ENCODE measurements at regions of chr6 and their contacts with region 1.

Region 1: GRCh38 chr6:159789377-159790148 is at the start of gene TCP1:
- DNase-seq: peak; percentile 99
- ATAC-seq: peak; percentile 86
- H3K4me3 ChIP-seq: peak within 1 kb of the TSS; percentile 90
- H3K27ac ChIP-seq: peak within 1 kb of the TSS; percentile 87
- H3K4me1 ChIP-seq: no peaks in the 10 kb centered on the region; the same call in 1 of the 2 replicates
- H3K27me3 ChIP-seq: no peaks in the 10 kb centered on the region
- CTCF ChIP-seq: no peak
- EP300 ChIP-seq: peak in 1 of 2 experiments; percentile 88; a peak in 1 of 4 replicates
- POLR2A ChIP-seq: peak; percentile 99
- RAD21 ChIP-seq: no peak
- polyA plus RNA-seq, gene TCP1: 201 to 241 TPM

Region 2: DNA sequence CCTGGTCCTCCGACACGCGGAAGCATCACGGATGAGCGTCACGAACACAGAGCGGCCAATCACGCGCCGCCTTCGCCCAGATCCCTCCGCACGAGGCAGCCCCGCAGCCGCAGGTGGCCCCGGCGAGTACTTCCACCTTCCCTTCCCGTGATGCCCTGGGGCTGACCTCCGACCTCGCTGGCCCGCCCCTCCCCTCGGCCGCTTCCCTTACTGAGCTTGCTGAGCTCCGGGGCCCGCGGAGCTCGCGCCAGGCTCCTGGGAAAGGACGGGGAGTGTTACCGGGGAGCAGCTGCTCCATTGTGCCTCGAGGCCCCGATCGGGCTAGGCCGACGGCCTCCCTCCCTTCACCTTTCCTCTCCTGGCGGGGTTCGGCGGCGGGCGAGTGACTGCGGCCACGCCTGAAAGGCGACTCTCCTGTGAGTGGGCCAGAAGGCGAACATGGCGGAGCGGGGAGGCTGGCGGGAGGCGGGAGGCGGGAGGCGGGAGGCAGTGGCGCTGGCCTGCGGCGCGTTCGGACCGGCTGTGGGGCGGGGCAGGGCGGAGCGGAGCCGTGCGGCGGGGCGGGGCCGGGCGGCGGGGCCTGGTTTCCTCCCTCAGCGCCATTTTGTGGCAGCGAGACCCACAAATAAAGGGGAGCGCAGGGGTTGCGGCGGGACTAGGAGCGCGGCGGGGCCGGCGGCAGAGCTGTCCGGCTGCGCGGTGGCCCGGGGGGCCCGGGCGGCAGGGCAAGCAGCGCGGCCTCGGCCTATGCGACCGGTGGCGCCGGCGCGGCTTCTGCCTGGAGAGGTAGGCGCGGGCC is 62.4 kb before region 1 on chr6 and contains the start of gene WTAP:
- CTCF ChIA-PET with region 1: interaction called, 8 read pairs
- POLR2A ChIA-PET with region 1: interaction called, 85 read pairs
- RAD21 ChIA-PET with region 1: interaction called, 52 read pairs
- SMC1A ChIA-PET with region 1: interaction called, 108 read pairs
- in situ Hi-C with region 1: no loop called
- intact Hi-C with region 1: loop called (anchors 1 kb)
- DNase-seq: peak; percentile 89
- ATAC-seq: peak; percentile 86
- H3K4me3 ChIP-seq: peak within 1 kb of the TSS; percentile 91
- H3K27ac ChIP-seq: peak within 1 kb of the TSS; percentile 97
- H3K4me1 ChIP-seq: no peaks in the 10 kb centered on the region
- H3K27me3 ChIP-seq: no peaks in the 10 kb centered on the region
- CTCF ChIP-seq: no peak
- EP300 ChIP-seq: no peak
- POLR2A ChIP-seq: peak; percentile 95
- RAD21 ChIP-seq: no peak
- polyA plus RNA-seq, gene WTAP: 102 to 132 TPM

Region 3: DNA sequence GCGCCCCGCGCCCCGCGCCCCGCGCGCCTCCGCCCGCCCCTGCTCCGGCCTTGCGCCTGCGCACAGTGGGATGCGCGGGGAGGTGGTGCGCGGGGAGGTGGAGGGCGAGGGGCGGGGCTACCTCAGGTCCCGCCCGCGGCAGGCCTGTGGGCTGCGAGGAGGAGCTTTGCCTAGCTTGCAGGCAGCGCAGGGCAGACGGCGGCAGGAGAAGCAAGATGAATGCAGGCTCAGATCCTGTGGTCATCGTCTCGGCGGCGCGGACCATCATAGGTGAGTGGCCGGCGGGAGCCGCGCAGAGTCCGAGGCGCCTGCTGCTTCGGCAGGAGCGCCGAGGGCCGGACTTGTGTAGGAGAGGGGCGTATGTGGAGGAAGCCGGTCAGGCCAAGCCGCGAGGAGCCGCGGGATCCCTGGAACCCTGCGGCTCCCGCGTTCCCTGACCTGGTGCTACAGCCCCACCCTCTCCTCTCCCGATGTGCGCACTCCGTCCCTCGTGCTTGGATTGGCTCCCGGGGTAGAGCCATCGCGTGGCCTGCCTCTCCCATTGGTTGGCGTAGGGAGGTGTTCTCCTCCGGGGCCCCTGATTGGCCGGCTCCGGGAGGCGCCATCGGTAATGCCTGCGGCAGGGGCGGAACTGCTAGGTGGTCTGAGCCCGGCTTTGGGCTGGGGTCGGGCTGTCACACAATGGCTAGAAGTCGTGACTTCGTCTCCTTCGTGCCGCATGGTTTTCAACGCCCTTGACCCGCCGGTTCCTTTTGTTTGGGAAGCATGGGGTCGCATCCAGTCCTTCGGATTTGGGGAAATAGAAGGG is 27.5 kb before region 1 on chr6 and contains the start of gene ACAT2:
- CTCF ChIA-PET with region 1: interaction called, 5 read pairs
- POLR2A ChIA-PET with region 1: interaction called, 50 read pairs
- RAD21 ChIA-PET with region 1: interaction called, 6 read pairs
- SMC1A ChIA-PET with region 1: interaction called, 18 read pairs
- in situ Hi-C with region 1: no loop called
- intact Hi-C with region 1: loop called (anchors 1 kb)
- DNase-seq: peak; percentile 78
- ATAC-seq: peak; percentile 98
- H3K4me3 ChIP-seq: peak within 1 kb of the TSS; percentile 93
- H3K27ac ChIP-seq: peak within 1 kb of the TSS; percentile 96
- H3K4me1 ChIP-seq: peaks cover 5% of the 10 kb centered on the region
- H3K27me3 ChIP-seq: no peaks in the 10 kb centered on the region
- CTCF ChIP-seq: 0 out of 6 replicates have a peak, but pooled peaks of 1 of the 3 experiments have one; percentile 4
- EP300 ChIP-seq: no peak
- POLR2A ChIP-seq: peak; percentile 88
- RAD21 ChIP-seq: no peak
- polyA plus RNA-seq, gene ACAT2: 249 to 257 TPM

Region 4: DNA sequence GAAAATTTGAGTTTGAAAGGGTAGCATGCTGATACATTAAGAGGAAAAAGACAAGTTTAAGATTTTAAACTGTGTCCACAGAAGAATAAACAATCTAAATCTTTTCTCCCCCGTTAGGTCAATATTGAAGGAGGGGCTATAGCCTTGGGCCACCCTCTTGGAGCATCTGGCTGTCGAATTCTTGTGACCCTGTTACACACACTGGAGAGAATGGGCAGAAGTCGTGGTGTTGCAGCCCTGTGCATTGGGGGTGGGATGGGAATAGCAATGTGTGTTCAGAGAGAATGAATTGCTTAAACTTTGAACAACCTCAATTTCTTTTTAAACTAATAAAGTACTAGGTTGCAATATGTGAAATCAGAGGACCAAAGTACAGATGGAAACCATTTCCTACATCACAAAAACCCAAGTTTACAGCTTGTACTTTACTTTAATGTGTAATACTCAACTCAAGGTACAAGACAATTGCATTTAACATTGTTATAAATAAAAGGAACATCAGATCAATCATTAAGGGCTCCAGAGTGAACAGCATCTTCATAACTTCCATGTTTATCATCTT is 10.9 kb before region 1 on chr6:
- CTCF ChIA-PET with region 1: interaction called, 3 read pairs
- POLR2A ChIA-PET with region 1: interaction called, 4 read pairs
- RAD21 ChIA-PET with region 1: interaction called, 3 read pairs
- SMC1A ChIA-PET with region 1: interaction called, 28 read pairs
- in situ Hi-C with region 1: no loop called
- intact Hi-C with region 1: no loop called
- DNase-seq: no peak
- ATAC-seq: no peak
- H3K4me3 ChIP-seq: no peak overlapping the region
- H3K27ac ChIP-seq: no peak overlapping the region
- H3K4me1 ChIP-seq: no peaks in the 10 kb centered on the region
- H3K27me3 ChIP-seq: no peaks in the 10 kb centered on the region
- CTCF ChIP-seq: no peak
- EP300 ChIP-seq: no peak
- POLR2A ChIP-seq: peak; percentile 32; the same call in 1 of the 2 replicates
- RAD21 ChIP-seq: no peak

Region 5: DNA sequence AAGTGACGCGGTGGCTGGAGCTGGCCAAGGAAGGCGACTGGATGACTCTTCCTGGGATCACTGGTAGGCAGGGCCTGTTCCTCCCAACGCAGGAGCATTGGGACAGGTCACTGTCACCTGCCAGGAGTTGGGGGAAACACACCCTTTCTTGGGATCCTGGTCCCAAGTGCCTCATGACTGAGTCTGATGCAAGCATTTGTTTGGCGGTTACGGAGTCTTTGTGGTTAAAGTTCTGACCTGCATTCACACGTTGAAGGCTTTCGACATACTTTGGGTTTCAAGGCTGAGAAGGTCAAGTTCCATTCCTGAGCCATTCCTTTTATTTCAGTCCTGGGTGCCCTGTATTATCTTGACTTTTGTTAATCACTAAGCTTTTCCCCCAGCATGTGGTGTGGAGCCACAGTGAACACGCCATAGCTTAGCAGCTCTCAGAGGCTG is 16.5 kb after region 1 on chr6:
- CTCF ChIA-PET with region 1: interaction called, 5 read pairs
- POLR2A ChIA-PET with region 1: interaction called, 5 read pairs
- RAD21 ChIA-PET with region 1: interaction called, 3 read pairs
- SMC1A ChIA-PET with region 1: interaction called, 11 read pairs
- in situ Hi-C with region 1: no loop called
- intact Hi-C with region 1: no loop called
- DNase-seq: no peak
- ATAC-seq: no peak
- H3K4me3 ChIP-seq: no peak overlapping the region
- H3K27ac ChIP-seq: no peak overlapping the region
- H3K4me1 ChIP-seq: no peaks in the 10 kb centered on the region
- H3K27me3 ChIP-seq: no peaks in the 10 kb centered on the region
- CTCF ChIP-seq: no peak
- EP300 ChIP-seq: no peak
- POLR2A ChIP-seq: no peak
- RAD21 ChIP-seq: no peak

Region 6: GRCh38 chr6:159852877-159853276 is 63.3 kb after region 1 on chr6:
- CTCF ChIA-PET with region 1: interaction called, 7 read pairs
- POLR2A ChIA-PET with region 1: interaction called, 5 read pairs
- RAD21 ChIA-PET with region 1: interaction called, 6 read pairs
- SMC1A ChIA-PET with region 1: interaction called, 15 read pairs
- in situ Hi-C with region 1: no loop called
- intact Hi-C with region 1: no loop called
- DNase-seq: no peak
- ATAC-seq: peak; percentile 66
- H3K4me3 ChIP-seq: no peak overlapping the region
- H3K27ac ChIP-seq: no peak overlapping the region
- H3K4me1 ChIP-seq: no peaks in the 10 kb centered on the region
- H3K27me3 ChIP-seq: no peaks in the 10 kb centered on the region; a peak in 2 of 4 replicates
- CTCF ChIP-seq: peak in 2 of 3 experiments; percentile 34 to 50; a peak in 3 of 6 replicates
- EP300 ChIP-seq: no peak
- POLR2A ChIP-seq: no peak
- RAD21 ChIP-seq: peak; percentile 53

Region 7: DNA sequence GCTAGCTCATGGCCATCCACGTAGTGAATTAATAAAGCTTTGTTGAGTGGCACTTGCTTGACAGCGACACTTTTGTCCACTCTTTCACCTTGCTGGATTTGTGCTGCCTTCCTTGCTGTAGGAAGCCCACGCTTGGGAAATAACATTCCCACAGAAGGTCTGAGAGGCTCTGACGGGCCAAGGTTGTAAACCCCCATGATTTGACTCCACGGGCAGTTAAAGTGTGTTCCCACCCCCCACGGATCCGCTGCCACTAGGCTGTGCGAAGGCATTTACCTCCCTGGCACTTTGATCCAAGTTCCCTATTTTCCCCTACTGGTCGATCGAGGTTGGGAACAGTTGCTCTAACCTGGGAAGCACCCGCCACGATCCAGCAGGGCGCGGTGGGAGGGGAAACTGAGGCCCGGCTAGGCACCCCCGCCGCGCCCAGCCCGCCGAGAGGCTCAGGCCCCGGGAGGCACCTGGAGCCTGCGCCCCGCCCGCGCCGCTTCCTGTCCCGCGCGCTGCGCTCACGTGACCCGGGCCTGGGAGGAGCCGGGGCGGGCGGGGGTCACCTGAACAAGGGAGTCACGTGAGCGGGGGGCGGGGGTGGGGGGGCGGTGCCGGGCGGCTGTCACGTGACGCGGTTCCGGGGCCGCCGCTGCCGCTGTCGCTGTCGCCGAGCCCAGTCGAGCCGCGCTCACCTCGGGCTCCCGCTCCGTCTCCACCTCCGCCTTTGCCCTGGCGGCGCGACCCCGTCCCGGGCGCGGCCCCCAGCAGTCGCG is 179.1 kb after region 1 on chr6 and contains the start of gene IGF2R:
- CTCF ChIA-PET with region 1: no interaction called
- POLR2A ChIA-PET with region 1: interaction called, 3 read pairs
- RAD21 ChIA-PET with region 1: no interaction called
- SMC1A ChIA-PET with region 1: interaction called, 3 read pairs
- in situ Hi-C with region 1: no loop called
- intact Hi-C with region 1: loop called (anchors 5 kb)
- DNase-seq: no peak
- ATAC-seq: peak; percentile 86
- H3K4me3 ChIP-seq: peak within 1 kb of the TSS; percentile 85
- H3K27ac ChIP-seq: peak within 1 kb of the TSS; percentile 84
- H3K4me1 ChIP-seq: 0 out of 2 replicates have a peak, but pooled peaks cover 3% of the 10 kb centered on the region
- H3K27me3 ChIP-seq: no peaks in the 10 kb centered on the region
- CTCF ChIP-seq: no peak
- EP300 ChIP-seq: no peak; a peak in 1 of 4 replicates
- POLR2A ChIP-seq: peak; percentile 94
- RAD21 ChIP-seq: 0 out of 2 replicates have a peak, but pooled peaks have one; percentile 15
- polyA plus RNA-seq, gene IGF2R: 1.00 to 1.5 TPM